Upper lobe of right lung (tissue), 1 donor: ENCODE measurements at regions of chr14 and their contacts with region 1.

Region 1: GRCh38 chr14:89296281-89296745 is 120.7 kb downstream of the FOXN3 start:
- DNase-seq: no peak
- ATAC-seq: no peak
- H3K4me3 ChIP-seq: no peak overlapping the region
- H3K27ac ChIP-seq: no peak overlapping the region
- H3K4me1 ChIP-seq: peaks cover 3% of the 10 kb centered on the region
- H3K27me3 ChIP-seq: no peaks in the 10 kb centered on the region
- CTCF ChIP-seq: no peak

Region 2: GRCh38 chr14:89399594-89400068 is 103.3 kb after region 1 on chr14:
- intact Hi-C with region 1: loop called (anchors 10 kb)
- DNase-seq: no peak
- ATAC-seq: no peak
- H3K4me3 ChIP-seq: no peak overlapping the region
- H3K27ac ChIP-seq: no peak overlapping the region
- H3K4me1 ChIP-seq: peaks cover 10% of the 10 kb centered on the region
- H3K27me3 ChIP-seq: no peaks in the 10 kb centered on the region
- CTCF ChIP-seq: no peak